ENCODE measurements at regions of chr3 and their contacts with region 1.

Region 1: DNA sequence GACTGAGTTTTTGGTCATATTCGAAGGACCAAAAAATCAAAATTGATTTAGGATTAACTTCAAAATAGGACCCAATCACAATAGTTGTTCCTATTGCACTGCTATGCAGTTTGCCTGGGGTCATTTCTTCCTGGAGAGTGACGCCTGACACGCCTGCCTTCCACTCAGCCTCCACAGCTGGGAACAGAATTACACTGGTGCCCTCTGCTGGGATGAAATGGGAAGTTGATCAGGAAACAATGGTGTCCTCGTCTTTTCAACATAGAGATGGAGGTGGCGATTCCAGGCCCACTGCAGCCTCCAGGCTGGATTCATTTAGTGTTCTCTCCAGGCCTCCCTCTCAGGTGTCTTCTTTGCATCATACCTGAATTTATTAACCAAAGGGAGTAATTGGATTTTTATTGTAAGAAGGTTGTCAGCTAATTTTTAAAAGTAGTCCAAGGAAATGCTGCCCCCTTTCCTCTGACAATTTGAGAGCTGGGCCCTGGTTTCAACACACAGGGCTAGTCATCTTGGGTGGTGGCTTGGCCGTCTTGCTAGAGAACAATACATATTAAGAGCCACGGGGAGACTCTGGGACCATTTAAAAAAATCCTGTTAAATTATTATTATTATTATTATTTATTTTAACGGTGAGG is 69.7 kb downstream of the GAP43 start:
- DNase-seq: peak; percentile 94
- H3K4me3 ChIP-seq: no peak overlapping the region
- H3K27ac ChIP-seq: no peak overlapping the region
- H3K4me1 ChIP-seq: no peaks in the 10 kb centered on the region
- H3K27me3 ChIP-seq: no peaks in the 10 kb centered on the region
- CTCF ChIP-seq: peak; percentile 72 to 84 (median 82)
- EP300 ChIP-seq: no peak
- POLR2A ChIP-seq: no peak

Region 2: DNA sequence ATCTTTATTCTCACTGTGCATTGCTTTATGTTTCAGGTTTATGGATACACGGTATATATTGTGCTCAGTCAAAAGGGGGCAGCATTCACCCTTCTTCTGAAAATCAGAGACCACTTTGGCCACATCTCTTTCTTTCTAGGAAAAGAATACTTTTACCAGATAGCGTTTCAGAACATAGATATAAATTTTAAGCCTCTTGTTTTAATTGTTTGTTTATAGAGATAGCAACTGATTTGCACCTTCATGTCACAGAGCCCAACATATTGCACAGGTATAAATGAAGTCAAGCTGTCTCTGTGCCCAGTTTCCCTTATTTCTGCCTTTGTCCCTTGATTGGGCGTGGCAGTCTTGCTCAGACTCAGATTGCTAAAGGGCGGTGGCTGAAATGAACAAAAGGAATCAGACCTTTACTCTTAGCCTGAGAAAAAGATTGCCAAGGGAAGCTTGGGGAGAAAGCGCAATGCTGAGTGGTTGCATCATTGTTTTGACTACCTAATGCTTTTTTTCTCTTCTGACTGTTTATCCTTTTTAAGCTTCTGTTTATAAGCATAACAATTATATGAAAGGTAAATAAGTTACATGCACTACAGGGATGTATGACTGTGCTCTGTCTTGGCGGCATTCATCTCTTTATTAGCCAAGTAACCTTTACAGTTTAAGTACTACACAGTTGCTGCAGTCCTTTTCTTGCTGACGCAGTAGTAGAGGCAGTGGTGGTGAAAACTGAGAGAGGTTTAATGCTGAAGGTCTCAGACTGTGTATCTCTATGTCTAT is 475.1 kb before region 1 on chr3:
- intact Hi-C with region 1: loop called (anchors 2 kb)
- DNase-seq: no peak
- H3K4me3 ChIP-seq: no peak overlapping the region
- H3K27ac ChIP-seq: no peak overlapping the region
- H3K4me1 ChIP-seq: peaks cover 0 to 14% (median 12%) of the 10 kb centered on the region in 4 donors
- H3K27me3 ChIP-seq: no peaks in the 10 kb centered on the region
- CTCF ChIP-seq: peak; percentile 49 to 61 (median 51)
- EP300 ChIP-seq: no peak
- POLR2A ChIP-seq: no peak

Region 3: GRCh38 chr3:115658337-115659181 is 34.4 kb before region 1 on chr3:
- intact Hi-C with region 1: loop called (anchors 5 kb)
- DNase-seq: peak; percentile 95
- H3K4me3 ChIP-seq: peak overlapping the region; percentile 76 to 82 (median 80)
- H3K27ac ChIP-seq: peak overlapping the region; percentile 95 to 98 (median 97)
- H3K4me1 ChIP-seq: peaks cover 20 to 37% (median 29%) of the 10 kb centered on the region in 4 donors
- H3K27me3 ChIP-seq: no peaks in the 10 kb centered on the region
- CTCF ChIP-seq: no peak
- EP300 ChIP-seq: no peak
- POLR2A ChIP-seq: no peak

Region 4: GRCh38 chr3:115819785-115820384 is 126.9 kb after region 1 on chr3:
- intact Hi-C with region 1: loop called (anchors 10 kb)
- DNase-seq: no peak
- H3K4me3 ChIP-seq: no peak overlapping the region
- H3K27ac ChIP-seq: no peak overlapping the region
- H3K4me1 ChIP-seq: no peaks in the 10 kb centered on the region
- H3K27me3 ChIP-seq: no peaks in the 10 kb centered on the region
- CTCF ChIP-seq: peak; percentile 95 to 96 (median 95)
- EP300 ChIP-seq: no peak
- POLR2A ChIP-seq: no peak

Region 5: GRCh38 chr3:116005404-116005803 is 312.4 kb after region 1 on chr3:
- intact Hi-C with region 1: no loop called
- DNase-seq: no peak
- H3K4me3 ChIP-seq: no peak overlapping the region
- H3K27ac ChIP-seq: no peak overlapping the region
- H3K4me1 ChIP-seq: peaks cover 0 to 4% (median 2%) of the 10 kb centered on the region in 4 donors
- H3K27me3 ChIP-seq: no peaks in the 10 kb centered on the region
- CTCF ChIP-seq: no peak
- EP300 ChIP-seq: no peak
- POLR2A ChIP-seq: no peak

Measured in esophagus muscularis mucosa (tissue), 4 donors.